ENCODE measurements at regions of chr7 and their contacts with region 1.

Region 1: DNA sequence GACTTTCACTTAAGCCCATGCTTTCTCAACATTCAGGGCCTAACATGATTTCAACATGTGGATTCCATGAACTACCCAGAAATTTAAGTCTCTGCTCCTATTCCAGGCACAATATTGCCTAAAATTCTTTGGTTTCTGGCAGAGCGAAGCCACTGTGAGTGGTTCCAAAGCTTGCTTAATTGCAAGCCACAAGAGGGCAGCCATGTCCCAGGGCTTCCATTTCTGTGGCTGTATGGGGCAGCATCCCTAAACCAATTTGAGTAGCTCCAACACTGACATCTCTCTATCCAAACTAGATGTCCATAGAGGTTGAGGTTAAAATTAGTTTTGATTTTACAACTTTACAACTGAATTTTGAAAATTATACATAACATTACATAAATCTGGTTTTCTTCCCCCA is 56.3 kb upstream of the MDFIC start:
- DNase-seq: peak; percentile 35 to 78 (median 46)
- ATAC-seq: peak; percentile 66
- H3K4me3 ChIP-seq: no peak overlapping the region
- H3K4me3 Mint-ChIP-seq: no peak overlapping the region
- H3K27ac ChIP-seq: no peak overlapping the region
- H3K27ac Mint-ChIP-seq: no peak overlapping the region
- H3K4me1 ChIP-seq: no peaks in the 10 kb centered on the region
- H3K4me1 Mint-ChIP-seq: no peaks in the 10 kb centered on the region
- H3K27me3 ChIP-seq: no peaks in the 10 kb centered on the region
- H3K27me3 Mint-ChIP-seq: no peaks in the 10 kb centered on the region
- CTCF ChIP-seq: peak; percentile 89

Region 2: GRCh38 chr7:114939484-114940097 is 74.0 kb after region 1 on chr7:
- CTCF ChIA-PET with region 1: interaction called, 15 read pairs
- POLR2A ChIA-PET with region 1: no interaction called
- intact Hi-C with region 1: loop called in 1 of 2 experiments (anchors 5 kb)
- DNase-seq: peak in 5 of 14 experiments; percentile 20 to 59 (median 45)
- ATAC-seq: no peak
- H3K4me3 ChIP-seq: no peak overlapping the region
- H3K4me3 Mint-ChIP-seq: no peak overlapping the region
- H3K27ac ChIP-seq: no peak overlapping the region
- H3K27ac Mint-ChIP-seq: no peak overlapping the region
- H3K4me1 ChIP-seq: peaks cover 19% of the 10 kb centered on the region
- H3K4me1 Mint-ChIP-seq: peaks cover 68% of the 10 kb centered on the region
- H3K27me3 ChIP-seq: no peaks in the 10 kb centered on the region
- H3K27me3 Mint-ChIP-seq: no peaks in the 10 kb centered on the region
- CTCF ChIP-seq: no peak

Region 3: GRCh38 chr7:115217373-115217772 is 351.8 kb after region 1 on chr7:
- CTCF ChIA-PET with region 1: interaction called, 7 read pairs
- POLR2A ChIA-PET with region 1: no interaction called
- intact Hi-C with region 1: loop called (anchors 1 to 2 kb)
- DNase-seq: peak in 3 of 14 experiments; percentile 7 to 44 (median 22)
- ATAC-seq: no peak
- H3K4me3 ChIP-seq: no peak overlapping the region
- H3K4me3 Mint-ChIP-seq: no peak overlapping the region
- H3K27ac ChIP-seq: no peak overlapping the region
- H3K27ac Mint-ChIP-seq: no peak overlapping the region
- H3K4me1 ChIP-seq: no peaks in the 10 kb centered on the region
- H3K4me1 Mint-ChIP-seq: peaks cover 5% of the 10 kb centered on the region
- H3K27me3 ChIP-seq: no peaks in the 10 kb centered on the region
- H3K27me3 Mint-ChIP-seq: no peaks in the 10 kb centered on the region
- CTCF ChIP-seq: peak; percentile 36

Region 4: DNA sequence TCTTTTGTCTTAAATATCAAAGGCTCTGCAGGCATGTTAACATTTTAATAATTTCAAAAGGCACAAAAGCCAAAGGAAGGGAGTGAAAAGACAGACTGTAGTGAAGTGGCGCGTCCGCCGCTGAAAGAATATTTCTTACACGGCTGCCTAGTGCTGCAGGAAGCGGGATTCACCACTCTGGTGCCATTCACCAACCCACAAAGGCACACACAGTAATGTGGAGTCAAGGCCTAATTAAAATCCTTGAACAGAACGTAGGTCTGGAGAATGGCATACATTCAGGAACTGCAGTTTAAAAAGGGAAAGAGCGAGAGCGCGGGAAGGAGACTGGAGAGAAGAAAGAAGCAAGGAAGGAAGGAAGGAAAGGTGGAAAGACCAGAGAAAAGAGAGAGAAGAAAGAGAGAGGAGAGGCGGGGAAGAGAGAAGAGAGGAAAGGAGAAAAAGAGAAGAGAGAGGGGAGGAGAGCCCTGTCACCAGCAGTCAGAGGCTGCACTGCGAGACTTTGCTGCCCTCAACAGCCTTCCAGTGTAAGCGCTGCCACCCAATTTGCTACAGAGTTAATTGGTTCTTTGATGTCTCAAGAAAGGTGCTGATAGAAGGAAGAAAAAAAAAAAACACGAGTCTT is 610.3 kb after region 1 on chr7:
- CTCF ChIA-PET with region 1: no interaction called
- POLR2A ChIA-PET with region 1: no interaction called
- intact Hi-C with region 1: loop called in 1 of 2 experiments (anchors 10 kb)
- DNase-seq: peak in 3 of 14 experiments; percentile 21 to 39 (median 31)
- ATAC-seq: no peak
- H3K4me3 ChIP-seq: no peak overlapping the region
- H3K4me3 Mint-ChIP-seq: peak overlapping the region; percentile 20
- H3K27ac ChIP-seq: no peak overlapping the region
- H3K27ac Mint-ChIP-seq: no peak overlapping the region
- H3K4me1 ChIP-seq: peaks cover 11% of the 10 kb centered on the region
- H3K4me1 Mint-ChIP-seq: peaks cover 13% of the 10 kb centered on the region
- H3K27me3 ChIP-seq: peaks cover 0 to 3% of the 10 kb centered on the region in 2 experiments
- H3K27me3 Mint-ChIP-seq: peaks cover 52% of the 10 kb centered on the region
- CTCF ChIP-seq: no peak

Region 5: DNA sequence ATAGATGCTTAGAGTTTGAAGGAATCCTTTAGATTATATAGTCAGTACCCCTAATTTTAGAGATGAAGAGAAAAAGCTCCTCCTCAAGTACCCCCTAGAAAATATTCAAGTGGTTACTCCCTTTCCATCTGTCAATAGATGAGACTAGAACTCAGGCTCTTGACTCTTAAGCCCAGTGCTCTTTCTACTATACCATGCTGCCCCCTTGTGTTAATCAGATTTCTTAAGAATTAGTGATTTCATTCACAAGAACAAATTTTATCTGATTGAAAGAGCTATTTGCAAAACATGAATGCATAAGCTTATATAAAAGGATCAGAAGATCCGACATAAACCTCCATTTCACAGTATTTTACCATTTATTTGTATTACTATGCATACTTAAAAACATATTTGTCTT is 985.7 kb after region 1 on chr7:
- CTCF ChIA-PET with region 1: interaction called, 4 read pairs
- POLR2A ChIA-PET with region 1: no interaction called
- intact Hi-C with region 1: loop called in 1 of 2 experiments (anchors 5 kb)
- DNase-seq: peak in 3 of 14 experiments; percentile 42 to 46 (median 46)
- ATAC-seq: no peak
- H3K4me3 ChIP-seq: no peak overlapping the region
- H3K4me3 Mint-ChIP-seq: no peak overlapping the region
- H3K27ac ChIP-seq: no peak overlapping the region
- H3K27ac Mint-ChIP-seq: no peak overlapping the region
- H3K4me1 ChIP-seq: no peaks in the 10 kb centered on the region
- H3K4me1 Mint-ChIP-seq: no peaks in the 10 kb centered on the region
- H3K27me3 ChIP-seq: no peaks in the 10 kb centered on the region
- H3K27me3 Mint-ChIP-seq: no peaks in the 10 kb centered on the region
- CTCF ChIP-seq: peak; percentile 15